Activated naive CD4-positive, alpha-beta T cell treated with anti-CD3 and anti-CD28 coated beads for 36 hours (primary cell): ENCODE measurements at regions of chr14 and their contacts with region 1.

Region 1: DNA sequence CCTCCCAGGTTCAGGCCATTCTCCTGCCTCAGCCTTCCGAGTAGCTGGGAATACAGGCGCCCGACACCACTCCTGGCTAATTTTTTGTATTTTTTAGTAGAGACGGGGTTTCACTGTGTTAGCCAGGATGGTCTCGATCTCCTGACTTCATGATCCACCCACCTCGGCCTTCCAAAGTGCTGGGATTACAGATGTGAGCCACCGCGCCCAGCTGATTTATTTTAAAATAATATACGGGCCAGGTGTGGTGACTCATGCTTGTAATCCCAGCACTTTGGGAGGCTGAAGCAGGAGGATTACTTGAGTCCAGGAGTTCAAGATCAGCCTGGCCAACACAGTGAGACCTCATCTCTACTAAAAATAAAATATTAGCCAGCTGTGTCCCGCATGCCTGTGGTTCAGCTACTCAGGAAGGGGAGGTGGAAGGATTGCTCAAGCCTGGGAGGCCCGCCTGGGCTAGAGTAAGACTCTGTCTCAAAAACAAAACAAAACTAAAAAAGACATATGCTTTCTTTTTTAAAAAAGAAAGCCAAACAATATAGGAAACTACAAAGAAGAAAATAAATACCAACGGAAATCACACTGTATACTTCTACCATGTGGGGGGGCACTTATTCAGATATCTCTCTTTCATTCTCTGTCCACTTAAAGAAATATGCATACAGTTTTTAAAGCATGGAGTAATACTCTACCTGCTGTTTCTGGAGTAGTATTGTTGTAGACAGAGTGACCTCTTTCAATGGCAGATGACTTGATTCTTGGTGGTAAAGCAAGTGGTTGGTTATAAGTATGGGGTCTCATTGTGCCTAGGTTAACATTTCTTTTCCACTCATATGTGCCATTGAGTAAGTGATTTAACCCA is 930 bp upstream of the MIA2 start:
- DNase-seq: no peak
- H3K4me3 Mint-ChIP-seq: no peak overlapping the region
- H3K27ac Mint-ChIP-seq: no peak overlapping the region
- H3K4me1 Mint-ChIP-seq: peaks cover 38% of the 10 kb centered on the region
- H3K27me3 Mint-ChIP-seq: no peaks in the 10 kb centered on the region

Region 2: DNA sequence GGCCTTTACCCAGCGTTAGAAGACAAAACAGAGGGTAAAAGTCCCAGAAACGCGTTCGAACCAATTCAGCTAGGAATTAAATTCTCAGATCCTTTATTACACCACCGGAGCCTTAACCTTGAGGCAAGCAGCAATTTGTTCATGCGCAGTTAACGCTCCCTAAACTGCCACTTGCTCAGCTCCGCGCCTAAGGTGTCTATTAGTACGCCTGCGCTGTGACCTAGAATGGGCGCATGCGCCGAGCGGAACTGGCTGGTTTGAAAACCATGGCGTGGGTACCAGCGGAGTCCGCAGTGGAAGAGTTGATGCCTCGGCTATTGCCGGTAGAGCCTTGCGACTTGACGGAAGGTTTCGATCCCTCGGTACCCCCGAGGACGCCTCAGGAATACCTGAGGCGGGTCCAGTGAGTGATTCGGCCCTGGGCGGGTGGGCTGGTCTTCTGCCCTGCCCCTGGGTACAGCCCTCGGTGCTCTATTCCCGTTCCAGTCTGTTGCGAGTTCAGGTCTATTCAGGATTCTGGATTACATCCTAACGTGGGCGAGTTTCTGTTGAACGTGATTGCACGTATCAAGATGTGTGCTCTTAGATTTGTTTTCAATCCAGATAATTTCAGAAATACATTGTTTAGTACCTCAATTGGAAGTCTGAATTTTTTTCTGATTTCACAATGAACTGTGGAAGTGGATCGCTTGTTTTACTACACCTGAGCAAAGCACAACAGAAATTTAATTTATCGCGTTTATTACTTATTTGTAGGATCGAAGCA is 118.5 kb before region 1 on chr14 and contains the start of gene GEMIN2:
- CTCF ChIA-PET with region 1: interaction called, 3 read pairs
- intact Hi-C with region 1: loop called (anchors 2 kb)
- DNase-seq: peak; percentile 96
- H3K4me3 Mint-ChIP-seq: peak within 1 kb of the TSS; percentile 94
- H3K27ac Mint-ChIP-seq: peak within 1 kb of the TSS; percentile 90
- H3K4me1 Mint-ChIP-seq: peaks cover 23% of the 10 kb centered on the region
- H3K27me3 Mint-ChIP-seq: no peaks in the 10 kb centered on the region
- total RNA-seq, gene GEMIN2: 20.7 to 22.7 TPM

Region 3: DNA sequence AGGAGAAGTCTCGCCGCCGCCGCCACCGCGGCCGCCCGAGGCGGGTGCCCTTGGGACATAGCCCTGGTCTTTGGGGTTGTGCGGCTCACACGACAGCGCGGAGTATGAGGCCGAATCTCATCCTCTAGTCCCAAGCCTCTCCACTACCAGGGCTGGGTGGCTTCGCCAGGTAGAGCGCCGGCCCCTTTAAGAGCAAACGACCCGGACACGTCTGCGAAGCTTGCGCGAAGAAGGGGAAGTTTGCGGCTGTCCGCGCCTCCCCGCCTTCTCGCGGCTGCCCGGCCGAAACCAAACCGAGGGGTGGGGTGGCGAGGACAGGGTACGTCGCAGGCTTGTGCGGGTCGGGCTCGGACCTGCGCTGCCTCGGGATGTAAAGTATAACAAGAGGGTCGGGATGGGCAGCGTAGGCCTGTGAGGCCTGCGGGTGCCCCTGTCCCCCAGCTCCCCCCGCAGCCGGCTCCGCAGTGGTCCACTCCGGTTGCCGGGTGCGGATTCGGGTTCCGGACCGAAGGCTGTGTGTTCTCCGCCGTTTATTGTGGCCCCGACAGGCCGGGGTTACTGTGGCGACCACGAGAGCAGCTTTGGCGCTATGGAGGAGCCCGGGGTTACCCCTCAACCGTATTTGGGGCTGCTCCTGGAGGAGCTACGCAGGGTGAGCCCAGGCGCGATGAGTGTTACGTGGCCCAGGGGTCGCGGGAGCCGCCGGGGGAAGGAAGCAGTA is 34.2 kb after region 1 on chr14:
- CTCF ChIA-PET with region 1: interaction called, 5 read pairs
- intact Hi-C with region 1: loop called (anchors 1 kb)
- DNase-seq: peak; percentile 68
- H3K4me3 Mint-ChIP-seq: peak overlapping the region; percentile 72
- H3K27ac Mint-ChIP-seq: peak overlapping the region; percentile 93
- H3K4me1 Mint-ChIP-seq: peaks cover 48% of the 10 kb centered on the region
- H3K27me3 Mint-ChIP-seq: no peaks in the 10 kb centered on the region

Region 4: GRCh38 chr14:39383026-39383660 is 150.4 kb after region 1 on chr14:
- CTCF ChIA-PET with region 1: interaction called, 8 read pairs
- intact Hi-C with region 1: loop called (anchors 1 kb)
- DNase-seq: no peak
- H3K4me3 Mint-ChIP-seq: no peak overlapping the region
- H3K27ac Mint-ChIP-seq: no peak overlapping the region
- H3K4me1 Mint-ChIP-seq: peaks cover 22% of the 10 kb centered on the region
- H3K27me3 Mint-ChIP-seq: no peaks in the 10 kb centered on the region

Region 5: DNA sequence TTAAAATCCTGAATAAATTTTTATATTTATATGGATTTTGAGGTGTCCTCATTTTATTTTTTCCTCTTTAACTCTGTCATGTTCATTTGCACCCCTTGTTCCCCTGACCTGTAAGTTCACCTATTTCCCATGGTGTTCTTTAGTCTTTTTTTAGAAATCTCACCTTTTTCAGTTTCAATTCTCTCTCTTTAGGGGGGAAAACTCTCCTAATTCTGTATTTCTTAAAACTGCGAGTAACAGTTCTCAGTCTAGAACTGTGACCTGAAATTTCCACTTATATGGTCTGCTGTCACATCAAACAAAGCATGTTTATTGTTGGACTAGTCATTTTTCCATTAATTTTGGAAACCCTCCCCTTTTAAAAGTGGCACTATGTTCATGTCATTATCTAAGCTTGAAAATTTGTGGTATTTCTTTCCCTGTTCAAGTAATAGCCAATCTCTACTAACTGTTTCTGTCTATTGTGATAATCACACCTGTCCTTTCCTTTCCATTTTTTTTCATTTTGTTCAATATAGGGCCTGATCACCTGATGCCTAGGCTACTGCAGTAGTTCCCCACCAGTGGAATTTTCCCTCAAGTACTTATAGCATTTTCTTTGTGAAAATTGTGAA is 213.5 kb after region 1 on chr14:
- CTCF ChIA-PET with region 1: interaction called, 4 read pairs
- intact Hi-C with region 1: loop called (anchors 1 kb)
- DNase-seq: no peak
- H3K4me3 Mint-ChIP-seq: no peak overlapping the region
- H3K27ac Mint-ChIP-seq: no peak overlapping the region
- H3K4me1 Mint-ChIP-seq: peaks cover 39% of the 10 kb centered on the region
- H3K27me3 Mint-ChIP-seq: no peaks in the 10 kb centered on the region